ENCODE measurements at regions of chr16 and their contacts with region 1.

Region 1: DNA sequence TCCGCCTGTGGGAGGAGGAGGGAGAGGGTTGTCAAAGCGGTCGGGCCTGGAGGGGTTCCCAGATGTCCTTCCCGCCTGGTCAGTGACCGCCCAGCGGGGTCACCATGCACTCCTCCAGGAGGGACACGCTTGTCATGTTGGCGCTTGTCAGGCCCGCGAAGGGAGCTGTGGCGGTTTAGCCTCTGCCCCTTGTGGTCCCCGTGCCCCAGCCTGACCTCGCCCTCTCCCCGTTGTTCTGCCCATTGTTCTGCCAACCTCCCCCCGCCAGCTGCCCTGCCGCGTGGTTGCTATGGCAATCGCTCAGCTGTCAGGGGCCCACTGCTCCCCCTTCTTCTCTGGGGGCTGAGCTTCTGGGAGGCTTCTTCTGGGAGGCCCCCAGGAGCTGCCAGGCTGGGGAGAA is 146.4 kb upstream of the CIBAR2 start:
- DNase-seq: no peak
- ATAC-seq: no peak
- H3K4me3 Mint-ChIP-seq: no peak overlapping the region
- H3K27ac Mint-ChIP-seq: no peak overlapping the region
- H3K4me1 Mint-ChIP-seq: peaks cover 6% of the 10 kb centered on the region
- H3K27me3 Mint-ChIP-seq: peaks cover 12% of the 10 kb centered on the region
- CTCF ChIP-seq: no peak

Region 2: DNA sequence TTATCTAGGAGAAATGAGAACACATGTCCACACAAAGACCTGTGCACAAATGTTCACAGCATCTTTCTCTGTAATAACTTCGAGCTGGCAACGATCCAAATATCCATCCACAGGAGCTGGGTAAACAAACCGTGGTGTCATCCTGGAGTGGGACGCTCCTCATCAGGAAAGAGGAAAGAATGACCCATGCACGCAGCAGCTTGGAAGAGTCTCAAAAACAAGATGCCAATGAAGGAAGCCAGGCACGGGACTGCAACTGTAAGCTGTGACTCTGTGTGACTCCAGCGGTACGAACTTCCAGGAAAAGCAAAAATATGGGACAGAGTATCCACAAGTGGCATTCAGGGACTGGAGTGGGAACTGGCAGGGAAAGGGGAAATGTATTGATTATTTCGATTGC is 109.7 kb before region 1 on chr16:
- CTCF ChIA-PET with region 1: no interaction called
- POLR2A ChIA-PET with region 1: no interaction called
- intact Hi-C with region 1: no loop called
- DNase-seq: no peak
- ATAC-seq: no peak
- H3K4me3 Mint-ChIP-seq: no peak overlapping the region
- H3K27ac Mint-ChIP-seq: no peak overlapping the region
- H3K4me1 Mint-ChIP-seq: no peaks in the 10 kb centered on the region
- H3K27me3 Mint-ChIP-seq: no peaks in the 10 kb centered on the region
- CTCF ChIP-seq: no peak

Region 3: GRCh38 chr16:85245307-85246172 is 13.1 kb before region 1 on chr16:
- CTCF ChIA-PET with region 1: interaction called, 23 read pairs
- POLR2A ChIA-PET with region 1: interaction called, 3 read pairs
- intact Hi-C with region 1: no loop called
- DNase-seq: peak; percentile 67
- ATAC-seq: peak; percentile 95
- H3K4me3 Mint-ChIP-seq: no peak overlapping the region
- H3K27ac Mint-ChIP-seq: no peak overlapping the region
- H3K4me1 Mint-ChIP-seq: no peaks in the 10 kb centered on the region
- H3K27me3 Mint-ChIP-seq: peaks cover 2% of the 10 kb centered on the region
- CTCF ChIP-seq: peak; percentile 72

Region 4: GRCh38 chr16:85275533-85276249 is 17.1 kb after region 1 on chr16:
- CTCF ChIA-PET with region 1: interaction called, 12 read pairs
- POLR2A ChIA-PET with region 1: interaction called, 4 read pairs
- intact Hi-C with region 1: no loop called
- DNase-seq: peak; percentile 79
- ATAC-seq: peak; percentile 98
- H3K4me3 Mint-ChIP-seq: no peak overlapping the region
- H3K27ac Mint-ChIP-seq: no peak overlapping the region
- H3K4me1 Mint-ChIP-seq: no peaks in the 10 kb centered on the region
- H3K27me3 Mint-ChIP-seq: peaks cover 3% of the 10 kb centered on the region
- CTCF ChIP-seq: peak; percentile 80

Region 5: GRCh38 chr16:85334718-85335583 is 76.3 kb after region 1 on chr16:
- CTCF ChIA-PET with region 1: no interaction called
- POLR2A ChIA-PET with region 1: no interaction called
- intact Hi-C with region 1: no loop called
- DNase-seq: peak; percentile 46
- ATAC-seq: peak; percentile 60
- H3K4me3 Mint-ChIP-seq: peak overlapping the region; percentile 47
- H3K27ac Mint-ChIP-seq: peak overlapping the region; percentile 46
- H3K4me1 Mint-ChIP-seq: peaks cover 18% of the 10 kb centered on the region
- H3K27me3 Mint-ChIP-seq: no peaks in the 10 kb centered on the region
- CTCF ChIP-seq: no peak

Measured in activated CD8-positive, alpha-beta T cell treated with anti-CD3 and anti-CD28 coated beads for 36 hours (primary cell).